ENCODE measurements at regions of chr18 and their contacts with region 1.

Region 1: GRCh38 chr18:22977847-22978701 is 44.9 kb downstream of the RBBP8 start:
- DNase-seq: peak; percentile 85
- ATAC-seq: peak; percentile 82
- H3K4me3 ChIP-seq: peak overlapping the region in 1 of 2 experiments; percentile 23; a peak in 2 of 4 replicates
- H3K27ac ChIP-seq: peak overlapping the region; percentile 74
- H3K4me1 ChIP-seq: peaks cover 20 to 26% of the 10 kb centered on the region in 2 experiments
- H3K27me3 ChIP-seq: no peaks in the 10 kb centered on the region
- CTCF ChIP-seq: peak in 1 of 3 experiments; percentile 43; a peak in 1 of 6 replicates
- POLR2A ChIP-seq: no peak
- RAD21 ChIP-seq: peak; percentile 54; the same call in 1 of the 2 replicates

Region 2: DNA sequence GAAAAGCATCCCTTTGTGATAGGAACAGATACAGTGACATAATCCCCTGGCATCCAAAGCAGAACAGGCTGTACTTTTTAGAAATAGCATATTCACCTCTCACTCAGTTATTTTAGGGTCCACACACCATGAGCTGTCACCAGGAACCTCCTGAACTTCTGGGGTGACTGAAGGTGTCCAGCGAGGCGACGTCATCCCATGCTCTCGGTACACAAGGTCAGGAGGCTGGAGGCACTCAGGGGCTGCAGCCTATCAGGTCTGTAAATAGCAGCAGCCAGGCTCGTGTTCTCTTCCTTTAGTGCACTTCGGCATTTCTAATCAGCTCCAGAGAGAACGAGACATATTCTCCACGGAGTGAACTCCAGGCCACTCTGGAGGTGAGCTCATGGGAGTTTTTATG is 710.4 kb before region 1 on chr18:
- CTCF ChIA-PET with region 1: no interaction called
- POLR2A ChIA-PET with region 1: no interaction called
- RAD21 ChIA-PET with region 1: no interaction called
- intact Hi-C with region 1: no loop called
- DNase-seq: no peak
- ATAC-seq: no peak
- H3K4me3 ChIP-seq: no peak overlapping the region
- H3K27ac ChIP-seq: no peak overlapping the region
- H3K4me1 ChIP-seq: no peaks in the 10 kb centered on the region
- H3K27me3 ChIP-seq: no peaks in the 10 kb centered on the region
- CTCF ChIP-seq: no peak
- POLR2A ChIP-seq: no peak
- RAD21 ChIP-seq: no peak

Region 3: GRCh38 chr18:22813648-22814328 is 164.3 kb before region 1 on chr18:
- CTCF ChIA-PET with region 1: interaction called, 60 read pairs
- POLR2A ChIA-PET with region 1: interaction called, 4 read pairs
- RAD21 ChIA-PET with region 1: interaction called, 7 to 9 read pairs
- intact Hi-C with region 1: loop called (anchors 1 kb)
- DNase-seq: no peak
- ATAC-seq: peak; percentile 74
- H3K4me3 ChIP-seq: no peak overlapping the region
- H3K27ac ChIP-seq: peak overlapping the region; percentile 67
- H3K4me1 ChIP-seq: peaks cover 41 to 43% of the 10 kb centered on the region in 2 experiments
- H3K27me3 ChIP-seq: no peaks in the 10 kb centered on the region
- CTCF ChIP-seq: peak; percentile 65 to 84 (median 83)
- POLR2A ChIP-seq: no peak
- RAD21 ChIP-seq: peak; percentile 97

Region 4: GRCh38 chr18:22933206-22933957 is 44.7 kb before region 1 on chr18 and contains the start of gene RBBP8:
- CTCF ChIA-PET with region 1: interaction called, 6 read pairs
- POLR2A ChIA-PET with region 1: interaction called, 4 read pairs
- RAD21 ChIA-PET with region 1: no interaction called
- intact Hi-C with region 1: loop called (anchors 5 kb)
- DNase-seq: peak; percentile 58
- ATAC-seq: peak; percentile 87
- H3K4me3 ChIP-seq: peak within 1 kb of the TSS; percentile 60 to 71
- H3K27ac ChIP-seq: peak within 1 kb of the TSS; percentile 88
- H3K4me1 ChIP-seq: peaks cover 0 to 22% of the 10 kb centered on the region in 2 experiments; a peak in 3 of 4 replicates
- H3K27me3 ChIP-seq: no peaks in the 10 kb centered on the region
- CTCF ChIP-seq: no peak
- POLR2A ChIP-seq: peak; percentile 77
- RAD21 ChIP-seq: no peak
- total RNA-seq, gene RBBP8: 66.6 TPM